Right ventricle myocardium inferior (tissue), 1 donor: ENCODE measurements at regions of chr4 and their contacts with region 1.

Region 1: GRCh38 chr4:47668810-47669408 is 169.0 kb downstream of the CORIN start:
- DNase-seq: no peak
- ATAC-seq: no peak

Region 2: DNA sequence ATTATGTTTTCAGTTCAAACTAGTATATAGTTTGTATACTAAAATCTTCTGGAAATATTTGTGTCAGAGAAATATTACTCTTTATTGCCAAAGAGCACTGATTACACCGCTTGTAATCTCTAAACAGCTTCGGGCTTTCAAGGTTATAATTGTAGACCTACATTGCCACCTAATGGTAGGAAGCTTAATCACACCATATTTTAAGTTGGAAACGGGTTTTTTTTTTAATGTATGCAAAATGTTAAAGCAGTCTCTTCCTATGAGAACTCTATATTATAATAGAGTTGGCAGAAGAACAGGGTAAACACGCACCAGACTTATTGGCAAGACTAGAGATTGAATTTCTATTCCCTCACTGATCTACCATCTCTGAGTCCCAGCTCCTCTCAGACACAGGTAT is 264.9 kb after region 1 on chr4:
- intact Hi-C with region 1: loop called (anchors 5 kb)
- DNase-seq: no peak
- ATAC-seq: no peak